GM12878 (cell line): ENCODE measurements at regions of chr18 and their contacts with region 1.

Region 1: DNA sequence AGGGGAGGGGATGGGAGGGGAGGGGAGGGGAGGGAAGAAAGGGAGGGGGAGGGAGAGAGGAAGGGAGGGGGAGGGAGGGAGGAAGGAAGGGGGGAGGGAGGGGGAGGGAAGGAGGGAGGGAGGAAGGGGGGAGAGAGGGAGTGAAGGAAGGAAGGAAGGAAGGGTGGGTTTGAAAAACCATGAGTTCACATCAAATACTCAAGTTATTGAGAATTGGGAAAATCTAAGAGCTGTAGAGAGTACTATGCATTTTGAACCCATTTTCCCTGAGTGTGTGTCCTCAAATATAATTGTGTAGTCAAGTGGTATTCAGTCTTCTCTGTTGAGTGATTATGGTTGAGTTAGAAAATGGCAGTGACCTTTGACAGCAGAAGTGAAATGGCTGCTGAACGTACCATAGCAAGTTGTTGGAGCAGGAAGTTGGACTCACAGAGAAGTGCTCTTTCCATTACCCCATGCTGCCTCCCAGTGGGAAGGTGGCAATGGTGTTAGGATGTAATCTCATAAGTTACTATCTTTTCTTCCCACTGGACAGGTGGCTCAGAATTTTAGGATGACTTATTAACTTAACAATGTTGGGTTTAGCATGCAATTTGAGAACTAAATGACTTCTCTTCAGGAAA is 214.6 kb downstream of the SETBP1 start:
- DNase-seq: peak; percentile 53
- ATAC-seq: peak; percentile 86
- H3K4me3 ChIP-seq: no peak overlapping the region
- H3K27ac ChIP-seq: no peak overlapping the region
- H3K4me1 ChIP-seq: no peaks in the 10 kb centered on the region
- H3K27me3 ChIP-seq: no peaks in the 10 kb centered on the region
- CTCF ChIP-seq: peak; percentile 44 to 56 (median 48); a peak in 4 of 6 replicates
- EP300 ChIP-seq: no peak
- POLR2A ChIP-seq: no peak
- RAD21 ChIP-seq: peak; percentile 61

Region 2: DNA sequence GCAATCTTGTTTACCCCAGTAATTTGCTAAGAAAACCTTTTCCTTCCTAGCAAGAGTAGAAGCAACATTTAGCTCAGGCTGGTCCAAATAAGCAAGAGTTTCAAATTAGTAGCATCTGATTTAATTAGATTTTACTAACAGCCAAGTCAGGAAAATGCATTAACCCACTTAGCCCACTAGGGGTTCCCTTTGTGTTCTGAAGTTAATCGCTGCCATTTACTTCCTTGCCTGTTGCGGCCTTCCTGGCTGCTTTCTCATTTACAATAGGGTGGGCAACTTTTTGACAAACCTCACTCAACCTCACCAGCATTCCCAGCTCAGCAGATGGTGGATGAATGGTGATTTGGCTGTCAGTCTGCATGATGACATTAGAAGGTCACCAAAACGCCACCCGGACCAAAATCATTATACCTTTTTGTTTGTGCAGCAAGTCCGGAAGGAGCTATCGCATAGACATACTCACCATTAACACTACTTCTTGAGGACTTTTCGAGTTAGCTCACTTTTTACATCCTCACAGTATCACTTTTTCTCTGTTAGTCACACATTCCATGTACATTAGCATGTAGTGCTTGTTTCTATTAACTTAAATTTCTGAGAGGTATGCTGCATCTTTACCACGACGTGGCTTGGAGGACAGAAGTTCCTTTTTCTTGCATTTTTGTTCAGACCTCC is 316.1 kb before region 1 on chr18:
- CTCF ChIA-PET with region 1: interaction called, 5 read pairs
- POLR2A ChIA-PET with region 1: no interaction called
- RAD21 ChIA-PET with region 1: no interaction called
- SMC1A ChIA-PET with region 1: no interaction called
- in situ Hi-C with region 1: no loop called
- intact Hi-C with region 1: loop called (anchors 2 kb)
- DNase-seq: no peak
- ATAC-seq: peak; percentile 65; the same call in 2 of the 3 replicates
- H3K4me3 ChIP-seq: no peak overlapping the region
- H3K27ac ChIP-seq: no peak overlapping the region
- H3K4me1 ChIP-seq: no peaks in the 10 kb centered on the region
- H3K27me3 ChIP-seq: 0 out of 4 replicates have a peak, but pooled peaks cover 0 to 1% of the 10 kb centered on the region in 2 experiments
- CTCF ChIP-seq: peak; percentile 63 to 78 (median 67); a peak in 5 of 6 replicates
- EP300 ChIP-seq: no peak
- POLR2A ChIP-seq: no peak
- RAD21 ChIP-seq: peak; percentile 68

Region 3: DNA sequence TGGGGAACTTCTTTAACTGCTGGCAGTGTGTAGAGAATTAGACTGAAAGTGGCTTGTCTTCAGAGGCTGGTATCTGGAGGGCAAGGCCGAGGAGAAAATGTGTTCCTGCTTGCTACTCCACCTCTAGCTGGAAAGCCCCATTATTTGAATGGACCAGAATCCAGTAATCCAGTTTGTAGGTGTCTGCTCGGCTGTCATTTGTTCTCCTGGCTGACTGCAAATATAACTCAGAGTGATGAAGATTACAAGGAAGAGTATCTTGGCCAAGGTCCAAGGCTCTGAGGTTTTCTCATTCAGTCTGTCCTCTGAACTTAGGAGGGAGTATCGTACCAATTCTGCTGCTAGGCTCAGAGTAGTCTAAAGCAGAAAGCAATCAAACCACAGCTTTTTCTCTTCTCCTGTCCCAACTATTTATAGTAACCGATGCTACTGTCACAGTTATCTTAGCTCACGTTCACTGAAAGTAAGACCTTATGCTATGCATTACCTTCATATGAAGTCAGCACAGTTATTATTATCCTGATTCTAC is 14.0 kb after region 1 on chr18:
- CTCF ChIA-PET with region 1: interaction called, 9 read pairs
- POLR2A ChIA-PET with region 1: interaction called, 8 read pairs
- RAD21 ChIA-PET with region 1: interaction called, 9 read pairs
- SMC1A ChIA-PET with region 1: interaction called, 57 read pairs
- in situ Hi-C with region 1: no loop called
- intact Hi-C with region 1: no loop called
- DNase-seq: peak; percentile 68
- ATAC-seq: peak; percentile 85
- H3K4me3 ChIP-seq: peak overlapping the region; percentile 29; the same call in 1 of the 2 replicates
- H3K27ac ChIP-seq: 0 out of 2 replicates have a peak overlapping the region, but pooled peaks have one; percentile 13
- H3K4me1 ChIP-seq: peaks cover 45% of the 10 kb centered on the region
- H3K27me3 ChIP-seq: no peaks in the 10 kb centered on the region
- CTCF ChIP-seq: no peak
- EP300 ChIP-seq: peak in 1 of 2 experiments; percentile 53; a peak in 2 of 4 replicates
- POLR2A ChIP-seq: no peak
- RAD21 ChIP-seq: 0 out of 2 replicates have a peak, but pooled peaks have one; percentile 11

Region 4: GRCh38 chr18:45066886-45067285 is 171.6 kb after region 1 on chr18:
- CTCF ChIA-PET with region 1: no interaction called
- POLR2A ChIA-PET with region 1: no interaction called
- RAD21 ChIA-PET with region 1: no interaction called
- SMC1A ChIA-PET with region 1: no interaction called
- in situ Hi-C with region 1: no loop called
- intact Hi-C with region 1: no loop called
- DNase-seq: peak; percentile 2
- ATAC-seq: no peak; the same call in 2 of the 3 replicates
- H3K4me3 ChIP-seq: no peak overlapping the region
- H3K27ac ChIP-seq: no peak overlapping the region
- H3K4me1 ChIP-seq: no peaks in the 10 kb centered on the region
- H3K27me3 ChIP-seq: no peaks in the 10 kb centered on the region
- CTCF ChIP-seq: no peak
- EP300 ChIP-seq: no peak
- POLR2A ChIP-seq: no peak
- RAD21 ChIP-seq: no peak